ENCODE measurements at regions of chr19 and their contacts with region 1.

Region 1: GRCh38 chr19:32630338-32630737 is 44.6 kb downstream of the ANKRD27 start:
- DNase-seq: no peak
- H3K4me3 ChIP-seq: no peak overlapping the region
- H3K27me3 ChIP-seq: no peaks in the 10 kb centered on the region
- CTCF ChIP-seq: no peak

Region 2: GRCh38 chr19:32649751-32650150 is 19.4 kb after region 1 on chr19:
- CTCF ChIA-PET with region 1: no interaction called
- POLR2A ChIA-PET with region 1: interaction called, 17 read pairs
- DNase-seq: no peak
- H3K4me3 ChIP-seq: no peak overlapping the region
- H3K27me3 ChIP-seq: no peaks in the 10 kb centered on the region
- CTCF ChIP-seq: no peak